ENCODE measurements at regions of chr3 and their contacts with region 1.

Region 1: GRCh38 chr3:16048435-16049318 is 125.8 kb upstream of the GALNT15 start:
- DNase-seq: peak; percentile 55
- H3K4me3 Mint-ChIP-seq: no peak overlapping the region
- H3K27ac Mint-ChIP-seq: no peak overlapping the region
- H3K4me1 Mint-ChIP-seq: no peaks in the 10 kb centered on the region
- H3K27me3 Mint-ChIP-seq: peaks cover 3% of the 10 kb centered on the region

Region 2: DNA sequence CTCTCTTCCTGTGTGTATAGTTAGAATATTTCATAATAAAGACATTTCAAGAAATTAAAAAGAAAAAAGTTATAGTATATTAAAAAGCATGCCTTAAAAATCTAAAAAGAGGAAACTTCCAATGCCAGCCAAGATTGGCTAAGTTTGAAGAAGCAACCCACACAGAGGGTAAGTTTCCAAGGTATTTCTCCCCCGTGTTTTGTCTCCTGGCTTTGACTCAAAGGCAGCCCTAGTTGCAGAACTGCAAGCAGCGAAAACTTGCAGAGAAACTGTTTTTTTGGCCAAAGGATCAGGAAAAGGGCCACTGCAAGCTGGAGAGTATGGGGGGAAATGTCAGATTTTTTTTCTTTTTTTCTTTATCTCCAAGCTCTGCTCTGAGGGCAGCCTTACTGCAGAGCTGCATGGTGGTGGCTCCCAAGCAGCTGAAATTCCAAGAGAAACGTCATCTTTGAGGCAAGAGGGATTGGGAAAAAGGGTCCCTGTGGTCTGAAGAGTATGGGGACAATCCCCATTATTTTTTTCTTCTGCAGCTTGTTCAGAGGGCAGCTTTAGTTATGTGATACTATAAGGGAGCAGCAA is 470.3 kb before region 1 on chr3:
- CTCF ChIA-PET with region 1: no interaction called
- DNase-seq: no peak
- H3K4me3 Mint-ChIP-seq: no peak overlapping the region
- H3K27ac Mint-ChIP-seq: no peak overlapping the region
- H3K4me1 Mint-ChIP-seq: no peaks in the 10 kb centered on the region
- H3K27me3 Mint-ChIP-seq: no peaks in the 10 kb centered on the region

Region 3: DNA sequence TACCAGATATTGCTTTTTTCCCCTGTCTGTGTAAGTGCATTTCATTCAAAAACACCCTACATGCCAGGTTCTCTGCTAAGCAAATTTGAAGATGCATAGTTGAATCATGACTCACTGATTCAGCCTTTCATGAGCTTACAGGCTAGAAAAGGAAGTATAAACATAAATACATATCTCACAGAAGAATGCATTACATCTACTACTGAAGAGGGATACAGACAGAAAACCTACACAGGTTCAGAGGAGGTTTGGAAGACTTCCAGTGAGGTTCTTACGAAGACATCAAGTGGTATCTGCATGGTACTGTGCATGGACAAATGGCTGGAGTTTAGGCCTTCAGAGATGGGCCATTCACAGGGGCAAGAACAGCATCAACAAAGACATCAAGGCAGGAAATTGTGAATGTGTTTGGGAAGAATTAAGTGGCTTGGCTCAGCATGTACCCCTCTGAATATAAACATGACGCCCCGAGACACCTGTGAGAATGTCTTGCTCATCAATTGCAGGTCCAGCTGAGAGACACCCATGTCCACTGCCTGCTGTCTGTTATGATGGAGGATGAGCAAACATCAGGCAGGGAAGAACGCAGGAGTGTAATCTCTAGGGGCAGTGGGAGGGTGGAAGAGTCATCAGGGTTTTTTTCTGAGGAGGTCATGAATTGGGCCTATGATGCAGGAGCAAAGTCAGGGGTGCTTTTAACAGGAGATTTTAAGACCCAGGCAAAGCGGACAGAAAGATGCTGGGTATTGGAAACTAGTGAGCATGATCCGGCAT is 20.7 kb after region 1 on chr3:
- CTCF ChIA-PET with region 1: no interaction called
- DNase-seq: no peak
- H3K4me3 Mint-ChIP-seq: no peak overlapping the region
- H3K27ac Mint-ChIP-seq: no peak overlapping the region
- H3K4me1 Mint-ChIP-seq: no peaks in the 10 kb centered on the region
- H3K27me3 Mint-ChIP-seq: peaks cover 4% of the 10 kb centered on the region

Region 4: GRCh38 chr3:16177962-16178627 is 129.4 kb after region 1 on chr3:
- CTCF ChIA-PET with region 1: interaction called, 36 read pairs
- DNase-seq: peak; percentile 73
- H3K4me3 Mint-ChIP-seq: no peak overlapping the region
- H3K27ac Mint-ChIP-seq: no peak overlapping the region
- H3K4me1 Mint-ChIP-seq: no peaks in the 10 kb centered on the region
- H3K27me3 Mint-ChIP-seq: peaks cover 36% of the 10 kb centered on the region

Region 5: GRCh38 chr3:16211176-16211904 is 162.7 kb after region 1 on chr3:
- CTCF ChIA-PET with region 1: no interaction called
- DNase-seq: no peak
- H3K4me3 Mint-ChIP-seq: no peak overlapping the region
- H3K27ac Mint-ChIP-seq: no peak overlapping the region
- H3K4me1 Mint-ChIP-seq: no peaks in the 10 kb centered on the region
- H3K27me3 Mint-ChIP-seq: peaks cover 16% of the 10 kb centered on the region

Region 6: DNA sequence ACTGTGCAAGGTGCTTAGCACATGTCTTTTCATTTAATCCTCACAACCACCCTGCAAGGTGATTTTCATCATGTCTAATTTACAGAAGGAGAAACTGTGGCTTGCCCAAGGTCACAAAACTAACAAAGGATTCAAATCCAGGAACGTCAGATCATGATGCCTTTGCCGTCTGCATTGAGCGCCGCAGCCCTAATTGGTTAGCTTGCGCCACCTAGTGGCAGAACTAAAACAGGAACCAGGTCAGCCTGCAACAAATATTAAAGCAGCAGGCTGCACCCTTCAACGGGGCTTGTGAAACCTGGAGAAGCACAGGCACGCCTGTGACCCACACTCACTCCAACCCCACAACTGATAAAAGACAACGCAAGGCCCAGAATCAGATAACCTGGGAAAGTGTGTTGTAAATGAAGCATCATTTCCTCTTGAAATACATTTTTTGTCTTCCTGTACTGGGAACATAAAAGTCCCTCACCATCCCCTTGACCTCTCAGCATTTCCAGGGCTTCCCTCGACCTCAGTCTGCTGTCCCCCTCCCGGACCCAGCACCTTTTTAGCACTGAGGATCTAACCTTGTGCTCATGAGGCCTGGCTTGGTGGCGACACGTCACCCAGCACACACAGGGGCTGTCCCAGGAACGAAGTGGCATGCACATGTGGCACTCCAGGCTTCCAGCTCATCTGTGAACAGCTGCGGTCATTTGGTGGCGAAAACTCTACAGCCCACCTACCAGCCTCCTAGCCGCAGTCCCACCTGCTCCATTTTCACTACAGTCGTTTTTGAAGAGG is 198.8 kb after region 1 on chr3:
- CTCF ChIA-PET with region 1: interaction called, 13 read pairs
- DNase-seq: peak; percentile 84
- H3K4me3 Mint-ChIP-seq: no peak overlapping the region
- H3K27ac Mint-ChIP-seq: no peak overlapping the region
- H3K4me1 Mint-ChIP-seq: peaks cover 8% of the 10 kb centered on the region
- H3K27me3 Mint-ChIP-seq: no peaks in the 10 kb centered on the region